CD4-positive, alpha-beta T cell (primary cell): ENCODE measurements at regions of chr17 and their contacts with region 1.

Region 1: DNA sequence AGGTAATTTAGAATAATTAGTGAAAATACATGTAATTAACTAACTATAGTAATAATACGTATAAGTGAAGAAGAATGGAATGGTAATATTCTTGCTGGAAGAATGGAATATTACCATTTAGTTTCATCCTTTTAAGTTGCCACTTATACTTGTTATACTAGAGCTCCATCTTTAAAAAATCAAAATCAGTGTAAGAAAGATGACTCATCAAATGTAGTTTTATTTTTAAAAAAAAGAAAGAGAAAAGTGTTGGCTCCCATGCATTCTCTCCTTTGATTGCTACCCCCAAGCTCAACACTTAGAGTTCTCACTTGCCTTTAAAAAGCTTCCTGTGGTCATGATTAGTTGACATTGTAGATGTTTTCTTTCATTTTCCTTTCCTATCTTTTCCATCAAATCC is 82.4 kb upstream of the KIF2B start:
- DNase-seq: no peak
- ATAC-seq: no peak
- H3K4me3 ChIP-seq: no peak overlapping the region
- H3K4me3 Mint-ChIP-seq: no peak overlapping the region
- H3K27ac ChIP-seq: no peak overlapping the region
- H3K27ac Mint-ChIP-seq: no peak overlapping the region
- H3K4me1 ChIP-seq: no peaks in the 10 kb centered on the region
- H3K4me1 Mint-ChIP-seq: no peaks in the 10 kb centered on the region
- H3K27me3 ChIP-seq: no peaks in the 10 kb centered on the region
- H3K27me3 Mint-ChIP-seq: no peaks in the 10 kb centered on the region
- CTCF ChIP-seq: no peak

Region 2: GRCh38 chr17:53640808-53641207 is 99.5 kb before region 1 on chr17:
- CTCF ChIA-PET with region 1: no interaction called
- POLR2A ChIA-PET with region 1: no interaction called
- intact Hi-C with region 1: loop called in 1 of 2 experiments (anchors 5 kb)
- DNase-seq: no peak
- ATAC-seq: no peak
- H3K4me3 ChIP-seq: no peak overlapping the region
- H3K4me3 Mint-ChIP-seq: no peak overlapping the region
- H3K27ac ChIP-seq: no peak overlapping the region
- H3K27ac Mint-ChIP-seq: no peak overlapping the region
- H3K4me1 ChIP-seq: no peaks in the 10 kb centered on the region
- H3K4me1 Mint-ChIP-seq: no peaks in the 10 kb centered on the region
- H3K27me3 ChIP-seq: no peaks in the 10 kb centered on the region
- H3K27me3 Mint-ChIP-seq: no peaks in the 10 kb centered on the region
- CTCF ChIP-seq: no peak